ENCODE measurements at regions of chr6 and their contacts with region 1.

Region 1: DNA sequence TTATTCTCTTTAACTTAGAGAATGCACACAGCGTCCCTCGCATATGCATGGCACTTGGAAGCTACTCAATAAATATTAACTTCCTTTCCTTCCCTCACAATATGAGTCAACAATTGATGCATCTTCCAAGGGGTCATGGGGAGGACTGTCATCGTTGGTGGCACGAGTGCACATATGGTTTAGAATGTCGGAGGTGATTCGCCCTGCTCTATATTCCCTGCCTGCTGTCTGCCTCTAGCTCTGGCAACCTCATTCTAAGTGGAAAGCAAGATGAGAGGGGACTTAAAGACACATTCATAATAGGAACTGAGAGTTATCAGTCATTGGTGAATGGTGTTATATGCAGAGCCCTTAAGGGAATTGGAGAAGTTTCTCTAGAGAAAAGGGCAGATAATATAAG is 44.6 kb downstream of the MAK start:
- DNase-seq: no peak
- ATAC-seq: no peak
- H3K4me3 ChIP-seq: no peak overlapping the region
- H3K27ac ChIP-seq: no peak overlapping the region
- H3K4me1 ChIP-seq: no peaks in the 10 kb centered on the region
- H3K27me3 ChIP-seq: no peaks in the 10 kb centered on the region

Region 2: DNA sequence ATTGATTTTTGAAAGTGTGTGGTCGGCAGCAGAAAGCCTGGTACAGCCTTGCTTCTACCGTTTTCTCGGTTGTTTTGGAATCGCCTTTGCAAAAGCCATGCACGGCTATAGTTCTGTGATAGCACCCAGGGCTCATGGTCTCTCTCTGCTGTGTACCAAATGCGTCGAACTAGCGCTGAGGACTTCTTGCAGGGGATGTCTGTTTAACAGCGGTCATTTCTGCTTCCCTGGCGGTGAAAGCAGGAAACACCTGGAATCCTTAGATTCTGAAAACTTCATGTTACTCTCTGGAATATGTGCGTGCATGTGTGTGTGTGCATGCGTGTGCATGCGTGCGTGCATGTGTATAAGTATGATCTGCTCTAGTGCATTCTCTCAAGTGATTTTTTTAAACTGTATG is 298.7 kb before region 1 on chr6:
- intact Hi-C with region 1: loop called in 1 of 4 experiments (anchors 10 kb)
- DNase-seq: no peak
- ATAC-seq: no peak
- H3K4me3 ChIP-seq: no peak overlapping the region
- H3K27ac ChIP-seq: no peak overlapping the region
- H3K4me1 ChIP-seq: no peaks in the 10 kb centered on the region
- H3K27me3 ChIP-seq: no peaks in the 10 kb centered on the region